Heart right ventricle (tissue), 16 donors: ENCODE measurements at regions of chr4 and their contacts with region 1.

Region 1: GRCh38 chr4:99885063-99885664 is 9.1 kb downstream of the LAMTOR3 start:
- DNase-seq: no peak
- ATAC-seq: no peak
- H3K4me3 ChIP-seq: no peak overlapping the region
- H3K27ac ChIP-seq: no peak overlapping the region
- H3K4me1 ChIP-seq: peaks cover 0 to 23% (median 7%) of the 10 kb centered on the region in 9 donors
- H3K27me3 ChIP-seq: no peaks in the 10 kb centered on the region
- CTCF ChIP-seq: peak in 8 of 9 donors; percentile 26 to 60 (median 51)

Region 2: DNA sequence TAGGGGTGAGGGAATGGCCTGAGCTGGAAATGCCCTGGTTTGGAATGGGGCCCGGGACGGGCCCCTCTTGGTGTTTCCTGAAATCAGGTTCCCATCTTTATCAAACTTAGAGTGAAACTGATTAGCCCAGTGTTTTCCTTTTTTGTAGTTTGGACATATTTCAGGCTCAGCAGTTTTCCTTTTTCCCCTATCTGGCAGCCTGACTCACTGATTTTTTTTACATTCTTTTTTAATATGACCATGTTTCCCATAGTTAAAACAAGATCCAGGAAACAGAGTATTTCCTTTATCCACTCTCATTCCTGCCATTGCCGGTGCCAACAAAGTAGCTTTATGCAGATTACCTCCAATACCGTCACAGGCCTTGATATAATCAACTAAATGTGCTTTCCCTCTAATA is 394.9 kb before region 1 on chr4:
- intact Hi-C with region 1: no loop called
- DNase-seq: no peak
- ATAC-seq: no peak
- H3K4me3 ChIP-seq: no peak overlapping the region
- H3K27ac ChIP-seq: no peak overlapping the region
- H3K4me1 ChIP-seq: no peaks in the 10 kb centered on the region
- H3K27me3 ChIP-seq: no peaks in the 10 kb centered on the region
- CTCF ChIP-seq: no peak

Region 3: DNA sequence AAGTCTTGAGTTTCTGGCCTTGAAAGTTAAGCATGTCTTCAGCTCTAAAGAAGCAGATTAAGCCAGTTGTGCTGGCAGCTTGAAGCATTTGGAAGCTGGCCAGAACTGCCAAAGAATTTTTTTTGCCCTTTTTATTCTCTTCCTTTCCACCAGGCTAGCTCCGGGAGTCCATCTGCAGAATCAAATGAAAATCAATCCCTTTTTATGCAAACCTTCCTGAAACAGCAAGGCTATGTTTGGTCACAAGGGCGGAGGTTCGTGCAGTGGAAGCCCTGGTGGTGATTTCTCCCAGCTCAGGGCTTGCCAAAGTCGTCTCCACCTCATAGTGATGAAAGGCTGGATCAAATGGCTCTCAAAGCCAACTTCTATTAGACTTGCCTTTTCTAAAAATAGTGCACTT is 206.0 kb before region 1 on chr4:
- intact Hi-C with region 1: no loop called
- DNase-seq: peak; percentile 34 to 68
- ATAC-seq: peak; percentile 90 to 97 (median 96)
- H3K4me3 ChIP-seq: no peak overlapping the region
- H3K27ac ChIP-seq: peak overlapping the region in 9 of 10 donors; percentile 5 to 73 (median 45)
- H3K4me1 ChIP-seq: peaks cover 0 to 24% (median 5%) of the 10 kb centered on the region in 9 donors
- H3K27me3 ChIP-seq: no peaks in the 10 kb centered on the region
- CTCF ChIP-seq: peak in 5 of 9 donors; percentile 8 to 27 (median 18)

Region 4: DNA sequence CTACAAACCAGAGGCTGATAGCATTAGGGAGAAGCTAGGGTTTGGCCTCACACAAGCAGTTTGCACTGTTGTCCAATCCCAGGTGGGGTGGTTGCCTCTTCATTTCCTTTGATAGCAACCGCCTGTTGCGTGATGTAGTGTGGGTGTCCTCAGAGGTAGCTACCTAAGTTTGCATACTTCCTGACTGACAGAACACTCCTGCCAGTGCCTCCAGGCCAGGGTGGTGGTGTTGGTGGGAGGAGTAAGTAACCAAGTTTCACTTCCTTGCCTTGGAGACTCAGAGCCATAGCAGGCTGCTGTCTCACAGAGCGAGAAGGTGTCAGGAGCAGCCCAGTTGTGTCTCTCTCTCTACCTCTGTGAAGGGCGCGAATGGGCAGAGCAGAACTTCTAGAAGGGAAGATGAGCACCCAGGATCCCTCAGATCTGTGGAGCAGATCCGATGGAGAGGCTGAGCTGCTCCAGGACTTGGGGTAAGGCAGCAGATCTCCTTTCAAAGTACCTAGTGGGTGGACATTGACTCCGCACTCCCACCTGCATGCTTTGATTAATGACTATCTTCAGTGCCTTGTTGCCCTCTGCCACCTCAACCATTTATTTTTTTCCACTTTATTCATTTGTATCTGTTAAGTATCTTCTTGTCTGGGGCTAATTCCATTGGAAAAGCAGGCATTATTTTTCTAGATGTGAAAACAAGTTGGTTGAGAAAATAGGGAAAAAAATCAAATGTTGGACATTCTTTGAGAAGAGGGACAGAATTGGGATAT is 68.4 kb before region 1 on chr4 and contains the start of gene DAPP1:
- intact Hi-C with region 1: loop called in 3 of 10 experiments (anchors 5 to 10 kb)
- DNase-seq: peak; percentile 13
- ATAC-seq: peak; percentile 47 to 66 (median 60)
- H3K4me3 ChIP-seq: peak within 1 kb of the TSS in 7 of 10 donors; percentile 2 to 61 (median 29)
- H3K27ac ChIP-seq: peak within 1 kb of the TSS in 4 of 10 donors; percentile 7 to 93 (median 16)
- H3K4me1 ChIP-seq: peaks cover 0 to 62% (median 0%) of the 10 kb centered on the region in 9 donors
- H3K27me3 ChIP-seq: no peaks in the 10 kb centered on the region
- CTCF ChIP-seq: no peak
- total RNA-seq, gene DAPP1: 0.16 to 5.4 (median 0.72) TPM in 9 of 10 donors, not detected in the other

Region 5: GRCh38 chr4:99827454-99827853 is 57.7 kb before region 1 on chr4:
- intact Hi-C with region 1: no loop called
- DNase-seq: no peak
- ATAC-seq: no peak
- H3K4me3 ChIP-seq: no peak overlapping the region
- H3K27ac ChIP-seq: no peak overlapping the region
- H3K4me1 ChIP-seq: peaks cover 0 to 27% (median 0%) of the 10 kb centered on the region in 9 donors
- H3K27me3 ChIP-seq: no peaks in the 10 kb centered on the region
- CTCF ChIP-seq: no peak

Region 6: GRCh38 chr4:100147198-100147597 is 262.0 kb after region 1 on chr4:
- intact Hi-C with region 1: no loop called
- DNase-seq: no peak
- ATAC-seq: no peak
- H3K4me3 ChIP-seq: no peak overlapping the region
- H3K27ac ChIP-seq: no peak overlapping the region
- H3K4me1 ChIP-seq: no peaks in the 10 kb centered on the region
- H3K27me3 ChIP-seq: no peaks in the 10 kb centered on the region
- CTCF ChIP-seq: no peak